ENCODE measurements at regions of chr14 and their contacts with region 1.

Region 1: GRCh38 chr14:34722717-34723545 is 8.5 kb upstream of the CFL2 start:
- DNase-seq: no peak

Region 2: GRCh38 chr14:33026850-33027430 is 1696.0 kb before region 1 on chr14:
- intact Hi-C with region 1: no loop called
- DNase-seq: peak; percentile 58

Region 3: GRCh38 chr14:34671716-34672115 is 51.2 kb before region 1 on chr14:
- intact Hi-C with region 1: loop called (anchors 1 to 5 kb)
- DNase-seq: no peak